GM12878 (cell line): ENCODE measurements at regions of chr12 and their contacts with region 1.

Region 1: GRCh38 chr12:102300824-102301461 is 103.3 kb upstream of the PMCH start:
- DNase-seq: peak; percentile 61
- ATAC-seq: peak; percentile 98
- H3K4me3 ChIP-seq: no peak overlapping the region
- H3K27ac ChIP-seq: no peak overlapping the region
- H3K4me1 ChIP-seq: no peaks in the 10 kb centered on the region
- H3K27me3 ChIP-seq: no peaks in the 10 kb centered on the region
- CTCF ChIP-seq: peak; percentile 41 to 47 (median 42); a peak in 4 of 6 replicates
- EP300 ChIP-seq: no peak
- POLR2A ChIP-seq: no peak
- RAD21 ChIP-seq: peak; percentile 57

Region 2: GRCh38 chr12:102543494-102544485 is 242.8 kb after region 1 on chr12:
- CTCF ChIA-PET with region 1: interaction called, 23 read pairs
- POLR2A ChIA-PET with region 1: no interaction called
- RAD21 ChIA-PET with region 1: interaction called, 13 read pairs
- SMC1A ChIA-PET with region 1: interaction called, 18 read pairs
- in situ Hi-C with region 1: no loop called
- intact Hi-C with region 1: no loop called
- DNase-seq: no peak
- ATAC-seq: peak; percentile 80
- H3K4me3 ChIP-seq: no peak overlapping the region
- H3K27ac ChIP-seq: no peak overlapping the region
- H3K4me1 ChIP-seq: peaks cover 6% of the 10 kb centered on the region
- H3K27me3 ChIP-seq: no peaks in the 10 kb centered on the region
- CTCF ChIP-seq: peak; percentile 42 to 46 (median 45); a peak in 5 of 6 replicates
- EP300 ChIP-seq: no peak
- POLR2A ChIP-seq: no peak
- RAD21 ChIP-seq: peak; percentile 62

Region 3: GRCh38 chr12:102562836-102563425 is 262.0 kb after region 1 on chr12:
- CTCF ChIA-PET with region 1: no interaction called
- POLR2A ChIA-PET with region 1: no interaction called
- RAD21 ChIA-PET with region 1: no interaction called
- SMC1A ChIA-PET with region 1: no interaction called
- in situ Hi-C with region 1: no loop called
- intact Hi-C with region 1: no loop called
- DNase-seq: no peak
- ATAC-seq: no peak
- H3K4me3 ChIP-seq: no peak overlapping the region
- H3K27ac ChIP-seq: no peak overlapping the region
- H3K4me1 ChIP-seq: no peaks in the 10 kb centered on the region
- H3K27me3 ChIP-seq: no peaks in the 10 kb centered on the region
- CTCF ChIP-seq: no peak
- EP300 ChIP-seq: no peak
- POLR2A ChIP-seq: no peak
- RAD21 ChIP-seq: no peak

Region 4: GRCh38 chr12:102702447-102703114 is 401.6 kb after region 1 on chr12:
- CTCF ChIA-PET with region 1: interaction called, 22 read pairs
- POLR2A ChIA-PET with region 1: no interaction called
- RAD21 ChIA-PET with region 1: interaction called, 7 read pairs
- SMC1A ChIA-PET with region 1: interaction called, 6 read pairs
- in situ Hi-C with region 1: no loop called
- intact Hi-C with region 1: no loop called
- DNase-seq: no peak
- ATAC-seq: peak; percentile 78
- H3K4me3 ChIP-seq: no peak overlapping the region
- H3K27ac ChIP-seq: no peak overlapping the region
- H3K4me1 ChIP-seq: no peaks in the 10 kb centered on the region
- H3K27me3 ChIP-seq: no peaks in the 10 kb centered on the region
- CTCF ChIP-seq: peak; percentile 40 to 54 (median 49)
- EP300 ChIP-seq: no peak
- POLR2A ChIP-seq: no peak
- RAD21 ChIP-seq: peak; percentile 61